ENCODE measurements at regions of chr6 and their contacts with region 1.

Region 1: GRCh38 chr6:17700421-17701416 is 6.0 kb downstream of the NUP153 start:
- DNase-seq: no peak
- ATAC-seq: no peak
- H3K4me3 Mint-ChIP-seq: no peak overlapping the region
- H3K27ac Mint-ChIP-seq: peak overlapping the region; percentile 55
- H3K4me1 Mint-ChIP-seq: peaks cover 56% of the 10 kb centered on the region
- H3K27me3 Mint-ChIP-seq: no peaks in the 10 kb centered on the region

Region 2: GRCh38 chr6:17665132-17665531 is 35.6 kb before region 1 on chr6:
- CTCF ChIA-PET with region 1: no interaction called
- POLR2A ChIA-PET with region 1: no interaction called
- intact Hi-C with region 1: loop called in 1 of 2 experiments (anchors 5 kb)
- DNase-seq: no peak
- ATAC-seq: no peak
- H3K4me3 Mint-ChIP-seq: no peak overlapping the region
- H3K27ac Mint-ChIP-seq: no peak overlapping the region
- H3K4me1 Mint-ChIP-seq: peaks cover 19% of the 10 kb centered on the region
- H3K27me3 Mint-ChIP-seq: no peaks in the 10 kb centered on the region

Region 3: GRCh38 chr6:17803409-17803808 is 102.7 kb after region 1 on chr6:
- CTCF ChIA-PET with region 1: interaction called, 16 read pairs
- POLR2A ChIA-PET with region 1: no interaction called
- intact Hi-C with region 1: loop called (anchors 1 kb)
- DNase-seq: no peak
- ATAC-seq: no peak
- H3K4me3 Mint-ChIP-seq: no peak overlapping the region
- H3K27ac Mint-ChIP-seq: no peak overlapping the region
- H3K4me1 Mint-ChIP-seq: no peaks in the 10 kb centered on the region
- H3K27me3 Mint-ChIP-seq: peaks cover 7% of the 10 kb centered on the region

Region 4: GRCh38 chr6:17808609-17809008 is 107.9 kb after region 1 on chr6:
- CTCF ChIA-PET with region 1: interaction called, 16 read pairs
- POLR2A ChIA-PET with region 1: no interaction called
- intact Hi-C with region 1: loop called (anchors 1 kb)
- DNase-seq: no peak
- ATAC-seq: no peak
- H3K4me3 Mint-ChIP-seq: no peak overlapping the region
- H3K27ac Mint-ChIP-seq: no peak overlapping the region
- H3K4me1 Mint-ChIP-seq: no peaks in the 10 kb centered on the region
- H3K27me3 Mint-ChIP-seq: peaks cover 9% of the 10 kb centered on the region